Activated T-helper 1 cell treated with anti-CD3 and anti-CD28 coated beads, Interleukin-12 subunit alpha, Interleukin-12 subunit beta, Interleukin-2, Interleukin-4 antibody, amounts not matched to agents 30 ng/mL and 10 ng/mL and 1 ng/mL, durations not matched to agents 14 hours and 24 hours and 36 hours (primary cell): ENCODE measurements at regions of chr15 and their contacts with region 1.

Region 1: GRCh38 chr15:41493205-41493901 is at the start of gene ITPKA:
- DNase-seq: peak; percentile 78
- H3K4me3 Mint-ChIP-seq: peak within 1 kb of the TSS; percentile 76
- H3K27ac Mint-ChIP-seq: peak within 1 kb of the TSS; percentile 79
- H3K4me1 Mint-ChIP-seq: peaks cover 38% of the 10 kb centered on the region
- H3K27me3 Mint-ChIP-seq: peaks cover 16% of the 10 kb centered on the region
- total RNA-seq, gene ITPKA: 2.8 and 3.1 TPM in 2 replicates

Region 2: DNA sequence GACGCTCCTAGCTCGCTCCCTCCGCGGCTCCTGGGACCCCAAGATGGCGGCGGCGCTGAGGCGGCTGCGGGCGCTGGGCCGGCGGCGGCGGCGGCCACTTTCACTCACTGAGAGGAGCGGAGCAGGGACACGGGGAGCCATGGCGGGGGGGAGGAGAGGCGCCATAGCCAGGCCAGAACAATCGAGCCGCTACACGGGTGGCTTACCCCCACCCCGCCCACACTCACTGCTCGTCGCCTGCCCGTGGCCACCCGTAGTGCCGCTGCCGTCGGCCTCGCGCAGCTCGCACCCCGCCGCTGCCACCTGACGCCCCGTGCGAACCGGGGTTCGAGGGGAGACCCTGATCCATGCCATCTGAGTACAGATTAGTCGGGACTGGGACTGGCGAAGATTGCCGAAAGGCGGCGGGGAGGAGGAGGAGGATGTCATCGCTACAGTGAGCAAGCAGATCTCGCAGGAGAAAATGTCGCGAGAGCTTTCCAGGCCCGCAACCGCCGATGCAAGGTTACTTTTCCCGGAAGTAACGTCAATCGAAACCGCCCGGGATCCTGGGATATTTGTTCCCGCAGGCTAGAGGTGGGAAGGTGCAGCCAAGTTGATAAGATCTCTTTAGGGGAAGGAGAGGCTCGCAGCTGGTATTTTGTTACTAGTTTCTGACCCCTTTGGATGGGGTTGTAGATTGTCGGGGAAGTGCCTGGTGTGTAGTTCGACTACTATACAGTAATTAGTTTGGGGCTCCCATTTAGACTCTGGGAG is 377.1 kb before region 1 on chr15 and contains the start of gene INO80:
- intact Hi-C with region 1: loop called (anchors 5 kb)
- DNase-seq: peak; percentile 95
- H3K4me3 Mint-ChIP-seq: peak within 1 kb of the TSS; percentile 92
- H3K27ac Mint-ChIP-seq: peak within 1 kb of the TSS; percentile 99
- H3K4me1 Mint-ChIP-seq: peaks cover 20% of the 10 kb centered on the region
- H3K27me3 Mint-ChIP-seq: peaks cover 6% of the 10 kb centered on the region
- total RNA-seq, gene INO80: 39.2 and 39.6 TPM in 2 replicates

Region 3: GRCh38 chr15:41416742-41417406 is 76.5 kb before region 1 on chr15 and contains the start of gene RTF1:
- intact Hi-C with region 1: loop called (anchors 5 kb)
- DNase-seq: peak; percentile 98
- H3K4me3 Mint-ChIP-seq: peak within 1 kb of the TSS; percentile 93
- H3K27ac Mint-ChIP-seq: peak within 1 kb of the TSS; percentile 96
- H3K4me1 Mint-ChIP-seq: peaks cover 40% of the 10 kb centered on the region
- H3K27me3 Mint-ChIP-seq: no peaks in the 10 kb centered on the region
- total RNA-seq, gene RTF1: 41.0 and 44.7 TPM in 2 replicates

Region 4: DNA sequence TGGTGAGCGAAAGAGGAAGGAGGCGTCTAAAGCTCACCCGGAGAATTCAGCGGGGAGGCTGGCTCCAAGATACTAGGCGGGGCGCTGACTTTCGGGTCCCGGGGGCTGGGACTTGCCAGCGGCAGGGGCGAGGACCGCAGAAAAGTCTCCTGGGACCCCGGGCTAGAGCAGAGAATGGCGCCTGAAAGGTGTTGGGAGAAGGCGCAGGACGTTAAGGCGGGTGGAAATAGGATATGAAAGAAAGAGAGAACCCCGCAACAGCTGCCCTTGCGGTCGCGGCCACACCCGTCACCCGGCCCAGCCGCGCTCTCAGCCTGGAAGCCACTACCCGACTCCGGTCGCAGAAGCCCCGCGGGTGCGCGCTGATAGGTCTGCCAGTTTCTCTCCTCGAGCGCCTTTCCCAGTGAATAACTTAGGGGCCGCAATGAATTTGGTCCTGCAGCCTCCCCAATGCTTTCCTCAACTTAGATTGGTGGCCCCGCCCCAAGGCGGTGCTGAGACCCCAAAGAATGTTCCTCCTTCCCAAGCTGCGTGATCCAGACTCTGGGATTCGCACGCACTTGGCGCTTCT is 19.7 kb after region 1 on chr15:
- intact Hi-C with region 1: loop called (anchors 2 kb)
- DNase-seq: peak; percentile 23
- H3K4me3 Mint-ChIP-seq: peak overlapping the region; percentile 66
- H3K27ac Mint-ChIP-seq: no peak overlapping the region
- H3K4me1 Mint-ChIP-seq: peaks cover 24% of the 10 kb centered on the region
- H3K27me3 Mint-ChIP-seq: peaks cover 36% of the 10 kb centered on the region

Region 5: DNA sequence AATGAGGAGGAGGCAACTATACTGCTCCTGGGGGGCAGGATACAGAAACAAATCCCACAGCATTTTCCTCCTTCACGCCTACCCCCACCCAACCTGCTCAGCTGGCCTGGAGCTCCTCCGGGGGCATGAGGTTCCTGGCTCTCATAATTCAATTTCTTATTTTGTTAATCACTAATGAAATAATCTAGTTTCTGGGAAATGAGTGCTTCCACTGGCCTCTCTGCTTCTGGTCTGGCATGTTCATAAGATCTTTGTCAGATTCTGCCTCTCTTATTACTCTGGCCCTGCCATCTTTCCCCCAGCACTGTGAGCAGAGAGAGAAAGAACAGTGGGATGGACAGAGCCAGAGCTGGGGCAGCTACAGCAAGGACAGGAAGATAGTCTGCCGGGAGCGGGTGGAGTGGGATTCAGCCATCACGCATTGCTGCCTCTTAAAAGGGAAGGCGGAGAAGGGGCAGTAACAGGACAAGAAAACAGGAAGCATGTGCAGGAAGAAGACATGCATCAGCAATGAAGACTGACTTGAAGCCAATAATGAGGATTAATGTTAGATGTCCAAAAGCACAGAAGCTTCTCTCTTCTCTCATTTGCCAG is 37.1 kb after region 1 on chr15:
- intact Hi-C with region 1: no loop called
- DNase-seq: no peak
- H3K4me3 Mint-ChIP-seq: no peak overlapping the region
- H3K27ac Mint-ChIP-seq: no peak overlapping the region
- H3K4me1 Mint-ChIP-seq: no peaks in the 10 kb centered on the region
- H3K27me3 Mint-ChIP-seq: no peaks in the 10 kb centered on the region

Region 6: DNA sequence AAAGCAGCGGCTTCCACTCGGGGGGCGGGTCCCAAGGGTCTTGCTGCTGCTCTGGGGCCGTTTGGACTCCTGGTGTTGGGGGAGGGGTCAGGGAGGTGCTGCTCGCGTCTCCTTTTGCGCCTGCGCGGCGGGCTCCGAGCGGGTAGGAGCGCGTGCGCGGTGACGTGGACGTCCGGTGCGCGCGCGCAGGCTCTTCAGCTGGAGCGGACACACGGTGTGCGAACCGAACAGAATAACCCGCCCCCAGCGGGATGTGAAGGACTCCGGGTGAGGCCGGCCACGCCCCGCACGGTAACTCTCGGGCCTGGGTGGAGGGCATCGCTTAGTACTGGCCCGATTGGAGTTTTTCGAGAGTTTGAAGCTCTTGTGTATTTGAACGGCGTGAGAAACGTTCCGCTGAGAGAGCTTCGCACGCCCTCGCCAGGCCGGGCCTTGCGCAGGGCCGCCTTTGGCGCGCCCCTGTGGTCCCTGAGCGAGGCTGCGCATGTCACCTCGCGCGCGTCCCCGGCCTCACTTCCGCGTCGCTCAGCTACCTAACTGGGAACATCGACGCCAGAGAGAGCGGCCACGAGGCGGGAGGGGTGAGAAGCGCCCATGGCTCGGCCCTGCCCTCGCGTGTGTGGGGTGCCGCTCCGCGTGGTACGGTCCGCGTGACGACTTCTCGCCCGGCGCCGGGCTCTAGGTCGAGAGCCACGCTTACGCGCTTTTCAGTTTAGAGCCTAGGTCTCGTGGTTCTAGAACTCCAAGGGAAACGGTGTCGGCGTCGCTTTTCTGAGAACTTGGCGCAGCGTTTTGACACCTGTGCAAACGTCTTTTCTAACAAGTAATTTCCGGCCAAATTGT is 167.1 kb after region 1 on chr15 and contains the start of gene MGA:
- intact Hi-C with region 1: loop called (anchors 2 kb)
- DNase-seq: peak; percentile 88
- H3K4me3 Mint-ChIP-seq: peak within 1 kb of the TSS; percentile 90
- H3K27ac Mint-ChIP-seq: peak within 1 kb of the TSS; percentile 91
- H3K4me1 Mint-ChIP-seq: peaks cover 37% of the 10 kb centered on the region
- H3K27me3 Mint-ChIP-seq: peaks cover 28% of the 10 kb centered on the region
- total RNA-seq, gene MGA: 37.5 and 38.8 TPM in 2 replicates

Region 7: GRCh38 chr15:41827880-41828806 is 334.8 kb after region 1 on chr15 and contains the start of gene JMJD7:
- intact Hi-C with region 1: loop called (anchors 5 kb)
- DNase-seq: peak; percentile 88
- H3K4me3 Mint-ChIP-seq: peak within 1 kb of the TSS; percentile 86
- H3K27ac Mint-ChIP-seq: peak within 1 kb of the TSS; percentile 72
- H3K4me1 Mint-ChIP-seq: peaks cover 34% of the 10 kb centered on the region
- H3K27me3 Mint-ChIP-seq: no peaks in the 10 kb centered on the region
- total RNA-seq, gene JMJD7: 14.2 and 17.8 TPM in 2 replicates

Region 8: GRCh38 chr15:42046579-42046978 is 553.2 kb after region 1 on chr15:
- intact Hi-C with region 1: no loop called
- DNase-seq: no peak
- H3K4me3 Mint-ChIP-seq: no peak overlapping the region
- H3K27ac Mint-ChIP-seq: no peak overlapping the region
- H3K4me1 Mint-ChIP-seq: peaks cover 21% of the 10 kb centered on the region
- H3K27me3 Mint-ChIP-seq: peaks cover 18% of the 10 kb centered on the region